Tibial artery (tissue), 4 donors: ENCODE measurements at regions of chr21 and their contacts with region 1.

Region 1: GRCh38 chr21:37267269-37268184 is at the start of gene VPS26C:
- DNase-seq: peak; percentile 98 to 100
- H3K4me3 ChIP-seq: peak within 1 kb of the TSS; percentile 83 to 99
- H3K27ac ChIP-seq: peak within 1 kb of the TSS; percentile 95 to 98
- H3K4me1 ChIP-seq: peaks cover 0 to 30% (median 17%) of the 10 kb centered on the region in 4 donors
- H3K27me3 ChIP-seq: no peaks in the 10 kb centered on the region
- CTCF ChIP-seq: peak in 1 of 2 experiments; percentile 3

Region 2: GRCh38 chr21:37072988-37073416 is 194.5 kb before region 1 on chr21 and contains the starts of genes PIGP and TTC3:
- intact Hi-C with region 1: loop called (anchors 5 kb)
- DNase-seq: peak; percentile 89 to 96
- H3K4me3 ChIP-seq: peak within 1 kb of the TSS; percentile 69 to 71
- H3K27ac ChIP-seq: peak within 1 kb of the TSS; percentile 97 to 99
- H3K4me1 ChIP-seq: peaks cover 0 to 24% (median 14%) of the 10 kb centered on the region in 4 donors
- H3K27me3 ChIP-seq: no peaks in the 10 kb centered on the region
- CTCF ChIP-seq: no peak

Region 3: DNA sequence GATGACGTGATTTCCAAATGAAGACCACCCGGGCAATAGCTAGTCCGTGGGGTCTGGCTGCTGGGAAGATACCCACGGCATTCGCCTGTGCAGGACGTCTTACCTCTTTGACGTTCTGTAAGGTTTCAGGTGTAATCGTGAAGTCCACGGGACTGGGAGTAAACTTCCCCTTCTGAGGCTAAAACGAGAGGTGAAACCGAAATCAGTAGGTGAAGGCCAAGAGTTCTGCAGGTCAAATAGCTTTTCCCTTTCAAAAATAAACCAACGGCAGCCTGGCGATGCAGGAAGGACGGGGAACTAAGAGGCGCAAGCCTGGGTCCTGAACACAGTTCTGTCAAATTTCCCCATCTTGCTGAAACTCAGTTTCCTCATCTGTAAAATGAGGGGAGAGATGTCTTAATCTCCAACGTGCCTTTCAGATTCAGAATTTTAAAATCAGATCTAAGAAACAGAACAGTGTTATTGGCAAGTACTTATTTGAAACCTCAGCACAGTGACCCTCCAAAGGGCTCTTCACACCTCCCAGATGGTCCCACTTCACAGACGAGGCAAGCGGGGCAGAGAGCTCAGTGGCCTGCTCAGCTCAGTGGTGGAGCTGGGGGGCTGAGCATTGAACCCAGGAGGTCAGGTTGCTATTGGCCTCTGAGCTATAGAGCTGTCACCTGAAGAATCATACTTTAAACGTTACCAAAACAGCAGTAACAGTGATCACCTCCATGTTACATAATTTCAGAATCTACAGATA is 35.1 kb before region 1 on chr21:
- intact Hi-C with region 1: no loop called
- DNase-seq: no peak
- H3K4me3 ChIP-seq: no peak overlapping the region
- H3K27ac ChIP-seq: no peak overlapping the region
- H3K4me1 ChIP-seq: no peaks in the 10 kb centered on the region
- H3K27me3 ChIP-seq: no peaks in the 10 kb centered on the region
- CTCF ChIP-seq: no peak

Region 4: DNA sequence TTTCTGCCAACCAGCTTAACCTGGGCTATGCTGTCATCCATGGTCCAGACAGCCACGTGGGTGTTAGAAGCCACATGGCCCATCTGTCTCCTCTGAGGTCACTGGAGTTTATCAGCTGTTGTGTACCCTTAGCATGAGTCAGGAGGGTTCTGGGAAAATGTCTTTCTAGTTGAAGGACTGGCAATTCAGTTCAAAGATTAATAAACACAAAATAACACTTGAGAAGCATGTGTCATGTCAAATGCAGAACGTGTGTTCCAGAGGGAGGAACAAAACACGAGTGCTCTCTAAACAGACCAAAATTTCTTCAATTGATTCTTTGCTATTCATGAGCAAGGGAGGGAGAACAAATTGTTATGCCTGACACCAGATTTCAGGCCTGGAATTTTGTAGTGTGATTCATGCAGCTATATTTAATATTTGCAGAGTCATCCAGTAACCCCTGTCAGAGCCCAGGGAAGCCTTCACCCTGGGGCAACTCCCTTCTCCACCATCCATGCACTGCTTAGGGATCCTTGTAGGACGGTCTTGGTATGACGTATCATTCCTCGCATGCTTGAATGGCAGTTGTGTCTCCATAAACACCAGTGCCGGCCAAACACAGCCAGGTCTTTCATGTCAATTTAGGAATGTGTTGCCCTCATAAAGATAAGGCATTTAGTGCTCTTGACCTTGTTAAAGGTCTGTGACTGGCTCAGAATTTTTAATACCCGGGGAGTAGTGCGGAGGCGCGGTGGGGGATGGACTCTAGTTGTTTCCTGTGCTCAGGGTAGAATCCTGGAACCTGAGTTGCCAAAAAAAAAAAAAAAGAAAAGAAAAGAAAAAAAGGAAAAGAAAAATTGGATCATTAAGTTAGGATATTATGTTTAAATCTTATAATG is 71.4 kb after region 1 on chr21:
- intact Hi-C with region 1: loop called (anchors 10 kb)
- DNase-seq: peak in 1 of 2 donors; percentile 69
- H3K4me3 ChIP-seq: peak overlapping the region; percentile 21 to 31
- H3K27ac ChIP-seq: peak overlapping the region; percentile 77 to 82
- H3K4me1 ChIP-seq: peaks cover 0 to 22% (median 11%) of the 10 kb centered on the region in 4 donors
- H3K27me3 ChIP-seq: no peaks in the 10 kb centered on the region
- CTCF ChIP-seq: no peak

Region 5: DNA sequence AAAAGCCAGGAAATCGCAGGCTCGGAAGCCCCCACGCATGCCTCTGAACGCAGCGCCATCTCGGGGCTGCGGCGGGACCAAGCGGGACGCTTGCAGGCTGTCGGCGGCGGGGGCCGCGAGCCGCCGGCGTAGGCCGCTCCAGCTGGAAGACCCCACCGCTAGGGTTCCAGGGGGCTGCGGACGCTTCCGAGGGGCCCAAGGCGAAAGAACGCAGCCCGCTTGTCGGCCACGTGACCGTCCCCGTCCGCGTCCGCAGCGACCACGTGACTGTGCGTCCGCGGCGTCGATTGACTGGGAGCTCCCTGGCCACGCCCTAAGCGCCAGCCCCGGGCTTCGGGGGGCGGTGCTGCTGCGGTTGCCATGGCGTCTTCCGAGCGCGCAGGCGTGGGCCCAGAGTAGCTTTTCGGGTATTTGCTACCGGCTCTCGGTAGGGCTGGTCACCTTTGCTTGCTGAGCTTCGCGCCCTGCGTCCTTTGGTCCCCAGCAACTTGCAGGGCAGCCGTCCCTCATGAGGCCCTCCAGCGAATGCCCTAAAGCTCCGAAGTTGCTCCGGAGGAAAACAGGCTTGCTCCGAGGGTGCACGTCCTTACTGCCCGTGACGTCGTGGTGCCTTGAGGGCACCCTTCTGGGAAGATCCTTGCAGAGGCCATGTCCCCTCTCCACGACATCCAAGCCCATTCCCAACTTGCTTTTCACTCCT is 296.3 kb after region 1 on chr21:
- intact Hi-C with region 1: loop called (anchors 2 kb)
- DNase-seq: peak; percentile 93 to 96
- H3K4me3 ChIP-seq: peak overlapping the region; percentile 63 to 70
- H3K27ac ChIP-seq: peak overlapping the region; percentile 84 to 86
- H3K4me1 ChIP-seq: peaks cover 0 to 21% (median 16%) of the 10 kb centered on the region in 4 donors
- H3K27me3 ChIP-seq: no peaks in the 10 kb centered on the region
- CTCF ChIP-seq: peak; percentile 44 to 47